ENCODE measurements at regions of chr1 and their contacts with region 1.

Region 1: GRCh38 chr1:214551436-214552173 is at the start of gene PTPN14:
- DNase-seq: peak; percentile 94
- ATAC-seq: peak; percentile 78
- H3K4me3 Mint-ChIP-seq: peak within 1 kb of the TSS; percentile 93
- H3K27ac Mint-ChIP-seq: peak within 1 kb of the TSS; percentile 100
- H3K4me1 Mint-ChIP-seq: peaks cover 49% of the 10 kb centered on the region
- H3K27me3 Mint-ChIP-seq: no peaks in the 10 kb centered on the region
- CTCF ChIP-seq: no peak
- total RNA-seq, gene PTPN14: 83.3 to 88.4 TPM (median 86.4 TPM) in 3 replicates

Region 2: GRCh38 chr1:214584805-214585766 is 33.5 kb after region 1 on chr1:
- CTCF ChIA-PET with region 1: interaction called, 18 read pairs
- POLR2A ChIA-PET with region 1: interaction called, 13 read pairs
- DNase-seq: no peak
- ATAC-seq: peak; percentile 62
- H3K4me3 Mint-ChIP-seq: no peak overlapping the region
- H3K27ac Mint-ChIP-seq: no peak overlapping the region
- H3K4me1 Mint-ChIP-seq: peaks cover 18% of the 10 kb centered on the region
- H3K27me3 Mint-ChIP-seq: no peaks in the 10 kb centered on the region
- CTCF ChIP-seq: peak; percentile 43

Region 3: DNA sequence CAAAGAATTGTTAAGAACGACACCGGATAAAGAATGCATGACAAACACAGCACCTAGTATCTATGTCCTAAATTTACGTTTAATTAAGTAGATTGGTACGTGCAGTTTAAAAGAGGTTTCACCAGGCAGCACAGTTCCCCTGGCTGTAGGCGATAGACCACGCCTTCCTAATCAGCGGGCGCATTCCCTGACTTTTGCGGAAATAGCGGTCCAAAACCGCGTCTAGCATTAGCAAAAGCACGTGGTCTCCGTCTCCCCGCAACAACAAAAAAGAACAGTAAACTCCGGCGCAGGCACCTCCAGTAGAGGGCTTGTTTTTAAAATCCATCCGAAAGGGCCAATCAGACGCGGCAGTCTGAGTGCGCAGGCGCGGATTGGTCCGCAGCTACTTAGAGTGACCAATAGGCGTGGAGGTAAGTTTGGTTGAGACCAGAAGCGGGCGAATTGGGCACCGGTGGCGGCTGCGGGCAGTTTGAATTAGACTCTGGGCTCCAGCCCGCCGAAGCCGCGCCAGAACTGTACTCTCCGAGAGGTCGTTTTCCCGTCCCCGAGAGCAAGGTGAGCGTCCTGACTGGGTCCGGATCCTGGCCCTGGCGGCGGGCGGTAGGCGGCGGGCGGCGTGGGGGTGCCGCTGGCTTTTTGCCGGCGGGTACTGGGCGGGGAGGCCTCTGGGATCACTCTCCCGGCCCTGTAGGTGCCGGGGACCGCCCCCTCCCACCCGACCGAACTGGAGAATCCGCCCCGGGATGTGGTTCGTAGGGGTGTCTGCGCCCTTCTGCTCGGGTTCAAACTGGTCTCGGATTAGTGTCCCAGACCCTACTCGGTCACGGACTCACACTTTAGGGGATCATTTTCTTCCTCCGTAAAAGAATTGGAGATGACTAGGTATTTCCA is 51.4 kb after region 1 on chr1 and contains the start of gene CENPF:
- CTCF ChIA-PET with region 1: no interaction called
- POLR2A ChIA-PET with region 1: interaction called, 27 read pairs
- DNase-seq: peak; percentile 96
- ATAC-seq: peak; percentile 96
- H3K4me3 Mint-ChIP-seq: peak within 1 kb of the TSS; percentile 96
- H3K27ac Mint-ChIP-seq: peak within 1 kb of the TSS; percentile 90
- H3K4me1 Mint-ChIP-seq: peaks cover 19% of the 10 kb centered on the region
- H3K27me3 Mint-ChIP-seq: peaks cover 3% of the 10 kb centered on the region
- CTCF ChIP-seq: no peak
- total RNA-seq, gene CENPF: 137 to 166 TPM (median 143 TPM) in 3 replicates

Region 4: GRCh38 chr1:214623430-214623829 is 71.8 kb after region 1 on chr1:
- CTCF ChIA-PET with region 1: no interaction called
- POLR2A ChIA-PET with region 1: no interaction called
- DNase-seq: no peak
- ATAC-seq: no peak
- H3K4me3 Mint-ChIP-seq: no peak overlapping the region
- H3K27ac Mint-ChIP-seq: no peak overlapping the region
- H3K4me1 Mint-ChIP-seq: no peaks in the 10 kb centered on the region
- H3K27me3 Mint-ChIP-seq: no peaks in the 10 kb centered on the region
- CTCF ChIP-seq: no peak

Measured in WTC11 (cell line).